ENCODE measurements at regions of chr6 and their contacts with region 1.

Region 1: DNA sequence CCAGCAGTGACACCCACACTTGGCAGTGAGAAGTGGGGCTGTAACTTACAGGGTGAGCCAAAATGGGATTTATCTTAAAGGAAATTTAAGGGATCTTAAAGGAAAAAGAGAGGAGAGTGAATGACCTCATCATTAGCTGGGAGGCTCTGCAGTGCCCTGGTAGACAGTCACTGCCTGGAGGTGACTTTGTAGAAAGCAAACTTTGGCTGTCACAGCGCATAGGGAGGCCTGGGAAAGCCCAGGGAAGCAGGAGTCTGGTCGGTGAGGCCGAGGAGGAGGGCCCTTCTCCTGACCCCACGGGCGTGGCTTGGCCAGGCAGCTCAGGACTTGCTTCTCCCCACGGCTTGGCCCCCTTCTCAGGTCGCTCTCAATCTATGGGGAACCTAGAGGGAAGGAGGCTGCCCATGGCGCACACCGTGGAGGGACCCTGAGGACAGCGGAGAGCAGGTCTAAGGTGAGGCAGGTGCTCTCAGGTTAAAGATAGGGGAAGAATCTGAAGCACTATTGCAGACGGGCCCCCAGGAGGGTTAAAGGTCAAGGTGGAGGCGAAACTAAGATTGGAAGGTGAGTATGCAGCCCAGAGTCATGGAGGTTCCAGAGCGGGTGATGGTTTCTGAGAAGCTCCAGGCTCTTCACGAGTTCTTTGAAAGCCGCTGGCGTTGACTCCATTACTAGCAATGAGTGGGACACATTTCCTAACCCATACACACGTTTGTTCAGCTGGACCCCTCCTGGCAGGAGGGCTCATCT is 15.6 kb upstream of the RIPK1 start:
- DNase-seq: no peak
- H3K4me3 Mint-ChIP-seq: peak overlapping the region; percentile 60
- H3K27ac Mint-ChIP-seq: peak overlapping the region; percentile 56
- H3K4me1 Mint-ChIP-seq: peaks cover 30% of the 10 kb centered on the region
- H3K27me3 Mint-ChIP-seq: peaks cover 25% of the 10 kb centered on the region

Region 2: DNA sequence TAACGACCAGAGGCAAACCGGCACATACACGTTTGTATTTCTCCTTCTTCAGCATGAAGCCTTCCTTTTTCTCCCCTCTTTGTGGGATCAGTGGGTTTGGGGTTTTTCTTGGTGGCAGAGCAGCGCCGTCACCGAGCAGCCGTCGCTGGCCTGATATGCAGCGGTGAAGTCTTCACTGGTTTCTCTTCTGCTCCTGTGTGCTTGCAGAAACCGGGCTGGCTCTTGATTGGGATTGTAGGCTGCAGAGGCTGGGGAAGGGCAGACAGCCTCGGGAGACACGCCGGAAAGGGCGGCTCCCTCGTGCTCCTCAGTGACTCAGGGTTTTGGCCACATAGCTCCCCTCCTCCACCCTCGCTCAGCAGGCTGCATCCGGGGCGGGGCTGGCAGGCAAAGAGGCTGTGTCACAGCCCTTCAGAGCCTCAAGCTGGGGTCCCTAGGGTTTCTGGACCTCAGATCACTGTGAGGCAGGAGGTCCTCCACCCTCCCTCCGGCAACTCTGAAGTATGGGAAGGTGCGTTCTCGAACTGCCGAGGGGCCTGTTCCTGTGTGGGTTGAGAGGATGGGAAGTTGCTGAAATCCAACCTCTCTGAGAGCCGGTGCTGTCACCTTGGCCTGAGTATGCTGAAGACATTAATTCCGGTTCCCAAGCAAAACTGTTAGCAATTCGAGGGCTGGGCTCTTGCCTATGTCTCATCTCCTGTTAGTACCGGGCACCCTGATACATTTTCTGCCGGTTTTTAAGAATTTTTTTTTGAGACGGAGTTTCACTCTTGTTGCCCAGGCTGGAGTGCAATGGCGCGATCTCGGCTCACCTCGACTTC is 28.8 kb before region 1 on chr6:
- intact Hi-C with region 1: loop called (anchors 1 kb)
- DNase-seq: peak; percentile 87
- H3K4me3 Mint-ChIP-seq: peak overlapping the region; percentile 87
- H3K27ac Mint-ChIP-seq: peak overlapping the region; percentile 91
- H3K4me1 Mint-ChIP-seq: peaks cover 51% of the 10 kb centered on the region
- H3K27me3 Mint-ChIP-seq: no peaks in the 10 kb centered on the region